ENCODE measurements at regions of chr6 and their contacts with region 1.

Region 1: DNA sequence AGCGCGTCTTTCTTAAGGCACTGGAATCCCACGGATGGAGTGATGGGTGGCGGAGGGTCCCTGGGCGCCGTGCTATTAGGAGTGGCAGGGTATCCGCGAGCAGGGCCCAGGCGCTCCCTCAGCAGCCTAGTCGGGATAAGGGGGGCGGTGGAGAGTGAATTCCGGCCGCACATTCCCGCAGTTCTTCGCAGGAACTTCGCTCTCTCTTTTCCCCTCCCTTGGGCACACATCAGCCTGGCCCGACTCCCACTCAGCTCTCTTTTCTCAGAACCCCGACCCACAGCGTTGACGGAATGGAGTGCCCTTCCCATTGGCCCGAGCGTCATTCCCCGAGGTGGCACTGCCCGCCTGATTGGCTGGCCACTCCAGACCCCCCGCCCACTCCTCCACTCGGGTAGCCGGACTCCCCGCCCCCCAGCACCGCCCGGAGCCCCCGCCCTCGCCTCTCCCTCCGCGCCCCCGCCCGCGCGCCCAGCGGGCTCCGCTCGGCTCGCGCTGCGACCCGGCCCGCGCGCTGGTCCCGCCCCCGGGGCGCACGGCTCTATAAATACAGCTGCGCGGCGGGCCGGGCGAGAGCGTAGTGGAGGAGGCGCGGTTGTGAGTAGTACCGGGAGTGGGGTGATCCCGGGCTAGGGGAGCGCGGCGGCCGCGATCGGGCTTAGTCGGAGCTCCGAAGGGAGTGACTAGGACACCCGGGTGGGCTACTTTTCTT is at the start of gene ID4:
- DNase-seq: peak; percentile 87
- H3K4me3 ChIP-seq: peak within 1 kb of the TSS; percentile 68
- H3K27ac ChIP-seq: peak within 1 kb of the TSS; percentile 73
- H3K27me3 ChIP-seq: no peaks in the 10 kb centered on the region
- CTCF ChIP-seq: 0 out of 2 replicates have a peak, but pooled peaks have one; percentile 7
- polyA plus RNA-seq, gene ID4: 0.32 and 0.55 TPM in 2 replicates

Region 2: GRCh38 chr6:19719691-19720128 is 117.2 kb before region 1 on chr6:
- CTCF ChIA-PET with region 1: no interaction called
- POLR2A ChIA-PET with region 1: interaction called, 11 read pairs
- DNase-seq: peak; percentile 49
- H3K4me3 ChIP-seq: no peak overlapping the region
- H3K27ac ChIP-seq: no peak overlapping the region
- H3K27me3 ChIP-seq: no peaks in the 10 kb centered on the region
- CTCF ChIP-seq: no peak

Region 3: DNA sequence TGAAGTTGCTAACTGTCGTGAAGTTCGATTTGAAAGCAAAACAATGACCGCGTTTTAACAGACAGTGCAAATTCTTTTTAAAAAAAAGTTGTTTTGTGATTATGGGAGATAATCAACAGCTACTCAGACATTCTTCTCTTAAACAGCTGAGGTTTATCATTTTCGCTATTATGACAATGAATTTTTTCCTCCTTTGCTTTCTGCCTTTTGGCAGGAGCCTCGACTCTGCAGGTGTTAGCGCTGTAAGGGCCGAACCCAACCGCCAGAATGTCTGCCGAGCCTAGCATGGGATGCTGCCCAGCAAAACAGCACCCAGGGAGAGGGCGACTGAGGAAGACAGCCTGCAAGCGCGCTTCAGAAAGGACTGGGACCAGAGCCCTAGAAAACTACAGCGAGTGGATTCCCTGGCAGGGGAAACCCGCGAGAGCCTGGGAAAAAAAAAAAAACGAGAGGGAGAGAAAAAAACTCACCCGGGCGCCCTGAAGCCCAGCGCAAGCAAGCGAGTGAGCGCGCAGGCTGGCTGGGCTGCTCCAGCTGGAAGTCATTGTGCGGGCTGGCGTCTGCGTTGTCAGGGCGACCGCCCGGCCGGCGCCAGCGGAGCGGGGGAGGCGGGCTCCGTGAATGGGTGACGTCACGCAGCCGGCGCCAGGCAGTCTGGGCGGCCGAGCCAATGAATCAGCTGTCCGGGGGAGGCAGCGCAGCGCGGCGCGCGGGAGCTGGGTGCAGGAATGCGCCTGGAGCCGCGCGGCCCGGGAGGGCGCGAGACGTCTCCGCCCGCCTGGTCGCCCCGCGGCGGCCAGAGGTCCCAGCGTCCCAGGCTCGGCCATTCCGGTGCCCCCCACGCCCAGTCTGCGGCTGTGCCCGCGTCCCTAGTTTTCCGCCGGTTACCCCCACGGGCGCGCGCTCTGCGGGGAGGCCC is 32.5 kb before region 1 on chr6:
- CTCF ChIA-PET with region 1: interaction called, 4 read pairs
- POLR2A ChIA-PET with region 1: interaction called, 93 read pairs
- DNase-seq: peak; percentile 93
- H3K4me3 ChIP-seq: peak overlapping the region; percentile 75
- H3K27ac ChIP-seq: peak overlapping the region; percentile 69
- H3K27me3 ChIP-seq: no peaks in the 10 kb centered on the region
- CTCF ChIP-seq: no peak